Left ventricle myocardium superior (tissue), 1 donor: ENCODE measurements at regions of chr11 and their contacts with region 1.

Region 1: DNA sequence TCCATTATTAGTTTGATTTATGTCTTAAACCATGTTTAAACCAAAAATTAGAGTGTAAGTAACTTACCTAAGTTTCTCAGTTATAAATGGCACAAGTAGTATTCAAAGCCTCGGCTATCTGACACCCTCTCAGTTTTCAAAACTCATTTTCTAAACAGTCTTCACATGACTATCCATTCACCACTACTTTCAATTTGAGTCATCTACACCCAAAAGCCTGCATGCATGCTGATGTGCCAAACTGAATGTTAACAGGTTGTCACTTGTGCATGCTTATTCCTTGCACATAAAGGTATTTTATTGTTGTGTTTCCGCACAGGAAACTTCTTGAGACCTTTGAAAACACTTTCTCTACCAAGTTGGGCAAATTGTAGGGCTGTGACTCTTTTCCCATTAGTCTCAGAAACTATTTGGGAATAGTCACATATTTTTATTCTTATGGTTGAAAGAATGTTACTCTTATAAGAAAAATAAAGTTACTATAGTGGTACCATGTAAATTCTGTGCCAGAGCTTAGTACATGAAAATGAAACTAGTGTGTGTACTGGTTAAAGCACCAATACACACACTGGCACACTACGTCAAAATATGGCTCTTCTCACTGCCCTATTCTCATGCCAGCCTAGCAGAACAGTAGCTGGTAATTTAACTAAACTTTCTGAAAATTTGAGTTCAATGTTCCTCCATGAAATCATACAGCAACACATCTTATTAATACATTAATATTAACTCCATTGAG is 2.2 kb upstream of the OR51E2 start:
- DNase-seq: no peak
- ATAC-seq: no peak

Region 2: GRCh38 chr11:4727171-4727570 is 27.3 kb after region 1 on chr11:
- intact Hi-C with region 1: loop called (anchors 2 kb)
- DNase-seq: no peak
- ATAC-seq: no peak

Region 3: DNA sequence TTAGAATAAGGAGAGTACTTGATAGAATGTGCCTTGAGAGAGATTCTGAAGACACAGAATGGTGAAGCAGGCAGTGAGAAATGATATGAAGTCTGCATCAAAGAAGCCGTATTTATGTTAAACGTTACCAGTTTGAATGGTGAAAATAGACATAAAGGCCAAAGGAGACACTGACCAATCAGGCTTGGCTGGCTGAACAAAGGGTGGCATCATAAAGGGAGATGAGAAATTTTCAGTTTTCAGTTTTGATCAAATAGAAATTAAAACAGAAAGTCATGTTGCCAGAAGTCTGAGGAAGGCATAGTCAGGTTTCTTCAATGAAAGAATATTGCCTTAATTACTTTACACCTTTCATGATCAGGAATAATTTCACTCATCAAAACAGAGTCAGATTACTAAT is 63.2 kb after region 1 on chr11:
- intact Hi-C with region 1: no loop called
- DNase-seq: no peak
- ATAC-seq: no peak